ENCODE measurements at regions of chr3 and their contacts with region 1.

Region 1: DNA sequence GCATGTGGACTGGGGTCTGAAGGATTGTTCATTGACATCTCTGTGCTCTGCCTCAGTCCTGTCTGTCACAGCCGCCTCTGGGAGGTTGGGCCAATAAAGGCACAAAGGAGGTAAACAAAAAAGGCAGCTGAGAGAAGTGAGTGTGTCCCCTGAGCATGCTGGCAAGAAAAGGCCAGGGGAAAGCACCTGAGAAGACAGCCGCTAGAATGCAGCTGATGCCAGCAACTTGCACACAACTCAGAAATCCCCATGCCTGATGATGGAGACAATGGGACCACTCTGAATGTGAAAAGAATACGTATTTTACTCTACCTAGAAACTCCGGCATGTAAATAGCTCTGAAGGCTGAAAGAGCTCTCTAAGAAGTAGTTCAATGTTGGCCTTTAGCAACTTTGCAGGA is 118.7 kb downstream of the KCNH8 start:
- DNase-seq: no peak
- H3K4me3 ChIP-seq: no peak overlapping the region
- H3K27ac ChIP-seq: no peak overlapping the region
- H3K4me1 ChIP-seq: no peaks in the 10 kb centered on the region
- H3K27me3 ChIP-seq: no peaks in the 10 kb centered on the region
- CTCF ChIP-seq: no peak
- EP300 ChIP-seq: no peak
- POLR2A ChIP-seq: no peak

Region 2: GRCh38 chr3:18363338-18363737 is 903.7 kb before region 1 on chr3:
- in situ Hi-C with region 1: no loop called
- intact Hi-C with region 1: no loop called
- DNase-seq: no peak
- H3K4me3 ChIP-seq: no peak overlapping the region
- H3K27ac ChIP-seq: no peak overlapping the region
- H3K4me1 ChIP-seq: no peaks in the 10 kb centered on the region
- H3K27me3 ChIP-seq: no peaks in the 10 kb centered on the region
- CTCF ChIP-seq: no peak
- EP300 ChIP-seq: no peak
- POLR2A ChIP-seq: no peak

Region 3: GRCh38 chr3:20173844-20174410 is 906.9 kb after region 1 on chr3:
- in situ Hi-C with region 1: no loop called
- intact Hi-C with region 1: loop called (anchors 10 kb)
- DNase-seq: no peak
- H3K4me3 ChIP-seq: no peak overlapping the region
- H3K27ac ChIP-seq: no peak overlapping the region
- H3K4me1 ChIP-seq: no peaks in the 10 kb centered on the region
- H3K27me3 ChIP-seq: no peaks in the 10 kb centered on the region
- CTCF ChIP-seq: no peak
- EP300 ChIP-seq: no peak
- POLR2A ChIP-seq: no peak